HepG2 (cell line): ENCODE measurements at regions of chr1 and their contacts with region 1.

Region 1: DNA sequence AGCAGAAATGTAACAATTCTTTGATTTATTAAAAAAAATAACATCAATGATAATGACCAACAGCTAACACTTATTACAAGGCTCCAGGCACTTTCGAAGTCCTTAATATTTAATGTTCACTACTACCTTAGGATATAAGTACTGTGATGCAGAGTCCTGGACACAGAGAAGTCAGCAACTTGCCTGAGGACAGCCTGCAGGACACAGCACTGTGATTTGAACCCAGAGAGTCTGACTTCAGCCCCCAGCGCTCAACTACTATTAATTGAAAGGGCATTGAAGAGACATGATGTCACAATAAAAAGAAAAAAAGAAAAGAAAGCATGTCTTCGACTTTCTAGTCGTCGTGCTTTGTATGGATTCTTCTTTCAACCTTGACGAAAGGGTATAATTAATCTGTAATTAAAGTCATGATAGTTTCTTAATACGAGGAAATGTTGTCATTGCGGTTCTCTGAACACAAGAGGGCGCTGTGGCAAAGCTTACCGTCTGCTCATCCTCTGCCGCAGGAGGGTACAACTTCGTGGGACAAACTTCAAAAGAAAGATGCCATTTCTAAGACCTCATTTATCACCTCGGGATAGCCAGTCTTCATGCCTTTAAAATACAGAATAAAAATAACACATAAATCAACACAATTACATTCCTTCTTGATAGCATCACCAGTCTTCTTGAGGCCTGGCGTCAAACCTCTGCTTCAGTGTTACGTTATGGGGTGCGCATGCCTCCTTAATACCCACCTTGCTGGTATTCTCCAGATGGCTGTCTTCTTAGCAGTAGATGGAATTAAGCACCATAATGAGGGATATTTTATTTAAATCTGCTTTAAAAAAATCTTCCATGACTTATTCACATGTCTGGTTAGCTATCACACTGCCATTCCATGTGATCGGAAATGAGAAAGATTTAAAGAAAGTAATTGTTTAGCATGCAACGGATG is 240.1 kb downstream of the DISC1 start:
- DNase-seq: peak; percentile 36
- ATAC-seq: peak; percentile 38; the same call in 1 of the 3 replicates
- H3K4me3 ChIP-seq: no peak overlapping the region
- H3K27ac ChIP-seq: no peak overlapping the region
- H3K4me1 ChIP-seq: no peaks in the 10 kb centered on the region
- H3K27me3 ChIP-seq: no peaks in the 10 kb centered on the region; a peak in 1 of 5 replicates
- CTCF ChIP-seq: peak; percentile 81
- EP300 ChIP-seq: no peak
- POLR2A ChIP-seq: no peak
- RAD21 ChIP-seq: peak; percentile 67; the same call in 1 of the 2 replicates

Region 2: DNA sequence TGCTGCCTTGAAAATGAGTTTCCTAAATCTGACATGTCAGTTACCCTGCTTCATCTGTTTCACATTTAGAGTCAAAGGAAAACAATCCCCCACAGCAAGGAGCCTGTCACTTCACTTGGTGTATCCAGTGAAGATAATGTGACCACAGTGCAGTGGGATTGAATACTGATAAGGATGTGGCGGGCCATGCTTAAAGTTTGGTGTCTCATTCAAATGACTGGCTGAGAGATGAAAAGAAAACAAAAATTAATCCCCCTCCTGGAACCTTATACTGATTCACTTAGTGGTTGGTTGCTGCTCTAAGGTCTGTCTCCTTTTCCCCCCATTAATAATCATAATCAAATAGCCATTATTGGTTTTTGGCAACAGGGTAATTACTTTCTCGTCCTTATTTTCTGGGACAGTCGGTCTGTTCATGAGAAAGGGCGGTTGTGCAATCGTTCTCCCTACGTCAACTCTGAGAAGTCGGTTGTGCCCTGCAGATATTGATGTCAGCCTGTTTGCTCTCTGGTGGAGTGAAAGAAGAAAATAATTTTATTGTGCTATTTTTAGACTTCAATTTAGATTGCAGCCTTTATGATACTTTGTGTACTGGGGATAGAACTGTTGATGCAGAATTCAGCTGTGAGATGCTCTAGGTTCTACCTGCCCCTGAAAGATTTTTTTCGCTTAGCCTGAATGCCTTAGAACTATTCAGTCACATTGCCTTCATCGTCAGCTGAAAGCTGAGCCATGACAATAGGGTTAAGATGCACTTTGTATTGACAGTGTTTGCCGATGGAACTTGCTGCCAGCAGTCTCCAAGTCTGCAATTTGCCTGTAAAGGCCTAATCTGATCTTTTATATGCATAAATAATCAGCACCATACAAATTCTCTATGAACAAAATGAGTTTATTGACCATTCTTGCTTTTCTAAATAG is 120.2 kb after region 1 on chr1:
- CTCF ChIA-PET with region 1: no interaction called
- POLR2A ChIA-PET with region 1: no interaction called
- in situ Hi-C with region 1: no loop called
- intact Hi-C with region 1: loop called (anchors 10 kb)
- DNase-seq: no peak
- ATAC-seq: no peak
- H3K4me3 ChIP-seq: no peak overlapping the region
- H3K27ac ChIP-seq: no peak overlapping the region
- H3K4me1 ChIP-seq: no peaks in the 10 kb centered on the region
- H3K27me3 ChIP-seq: no peaks in the 10 kb centered on the region
- CTCF ChIP-seq: no peak
- EP300 ChIP-seq: no peak
- POLR2A ChIP-seq: no peak
- RAD21 ChIP-seq: no peak

Region 3: GRCh38 chr1:232950197-232951176 is 1083.8 kb after region 1 on chr1 and contains the start of gene NTPCR:
- CTCF ChIA-PET with region 1: no interaction called
- POLR2A ChIA-PET with region 1: no interaction called
- in situ Hi-C with region 1: loop called (anchors 25 kb)
- intact Hi-C with region 1: no loop called
- DNase-seq: peak; percentile 84
- ATAC-seq: peak; percentile 83
- H3K4me3 ChIP-seq: peak within 1 kb of the TSS; percentile 78 to 94 (median 87)
- H3K27ac ChIP-seq: peak within 1 kb of the TSS; percentile 55
- H3K4me1 ChIP-seq: peaks cover 31% of the 10 kb centered on the region
- H3K27me3 ChIP-seq: peaks cover 0 to 5% of the 10 kb centered on the region in 2 experiments; a peak in 2 of 5 replicates
- CTCF ChIP-seq: no peak
- EP300 ChIP-seq: no peak
- POLR2A ChIP-seq: peak; percentile 47 to 75; a peak in 2 of 4 replicates
- RAD21 ChIP-seq: no peak
- total RNA-seq, gene NTPCR: 47.0 and 65.1 TPM in 2 replicates